ENCODE measurements at regions of chr16 and their contacts with region 1.

Region 1: DNA sequence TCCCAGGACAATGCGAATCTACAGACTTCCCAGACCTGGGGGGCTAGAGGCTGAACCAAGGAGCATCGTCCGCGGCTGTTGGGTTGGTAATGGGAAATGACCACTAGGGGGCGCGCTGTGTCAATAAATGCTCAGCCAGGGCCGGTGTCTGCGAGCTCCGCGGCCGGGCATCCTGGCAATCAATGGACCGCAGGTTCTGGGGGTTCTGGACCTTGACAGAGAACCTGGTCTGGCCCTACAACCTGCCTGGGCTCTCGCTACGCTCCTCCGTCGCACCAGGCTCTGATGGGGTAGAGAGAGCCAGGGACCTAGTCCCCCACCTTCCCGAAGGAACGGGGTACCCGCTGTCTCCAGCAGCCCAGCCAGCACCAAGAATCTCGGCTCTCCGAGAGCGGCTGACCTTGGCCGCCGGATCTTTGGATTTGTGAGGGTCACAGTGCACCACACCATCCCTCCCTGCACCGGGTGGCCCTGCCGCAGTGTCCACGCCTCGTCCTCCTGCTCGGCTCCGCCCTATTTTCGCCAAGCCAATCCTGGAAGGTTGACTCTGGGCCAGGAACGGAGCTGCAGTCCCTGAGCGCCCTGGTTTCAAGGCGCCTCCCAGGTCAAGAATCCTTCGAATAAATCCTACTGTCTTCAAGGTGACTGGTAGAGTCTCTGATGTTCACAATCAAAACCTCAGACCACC is 20.4 kb upstream of the BEAN1 start:
- DNase-seq: peak; percentile 90
- H3K4me3 Mint-ChIP-seq: peak overlapping the region; percentile 77
- H3K27ac Mint-ChIP-seq: peak overlapping the region; percentile 38
- H3K4me1 Mint-ChIP-seq: peaks cover 31% of the 10 kb centered on the region
- H3K27me3 Mint-ChIP-seq: peaks cover 17% of the 10 kb centered on the region

Region 2: DNA sequence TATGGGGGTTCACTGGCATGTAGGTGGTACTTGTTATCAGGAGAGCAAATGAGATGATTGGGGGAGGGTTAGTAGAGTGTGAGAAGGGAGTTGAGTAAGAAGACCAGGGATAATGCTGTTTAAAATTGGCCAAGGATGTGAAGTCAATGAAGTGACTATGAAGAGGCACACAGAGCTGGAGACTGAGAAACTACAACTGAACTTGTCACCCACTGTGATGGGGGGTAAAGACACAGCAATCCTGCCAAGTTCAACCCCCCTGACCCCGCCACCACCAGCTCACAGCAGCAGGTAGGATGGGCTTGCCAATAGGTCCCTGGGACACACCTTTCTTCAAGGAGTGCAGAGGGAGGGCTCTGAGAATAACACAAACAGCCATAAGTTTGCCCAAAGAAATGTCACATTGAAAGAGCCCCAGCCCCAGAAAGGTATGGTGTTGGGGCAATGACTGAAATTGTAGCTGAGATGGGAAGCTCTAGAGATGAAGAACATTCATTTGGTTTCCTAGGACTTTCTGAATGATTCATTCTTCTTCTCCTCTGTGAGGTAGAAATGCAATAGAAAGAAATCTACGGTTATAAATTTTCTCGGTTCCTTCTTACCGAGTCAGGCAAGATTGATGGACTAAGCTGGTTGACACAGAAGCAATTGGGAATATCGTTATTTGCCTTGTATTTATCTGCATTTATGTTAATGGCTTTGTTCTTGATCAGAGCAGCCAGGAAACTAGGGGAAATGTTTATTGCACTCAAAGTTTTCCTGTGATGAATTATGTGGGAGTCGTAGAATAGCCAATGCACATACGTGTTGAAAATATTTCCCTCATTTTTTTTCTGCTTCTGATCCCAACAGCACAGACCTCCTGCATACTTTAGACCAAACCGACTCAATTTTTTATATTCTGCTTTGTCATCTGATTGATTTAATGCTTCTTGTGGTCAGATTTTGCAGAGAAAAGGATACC is 689.7 kb before region 1 on chr16:
- CTCF ChIA-PET with region 1: no interaction called
- POLR2A ChIA-PET with region 1: no interaction called
- DNase-seq: no peak
- H3K4me3 Mint-ChIP-seq: no peak overlapping the region
- H3K27ac Mint-ChIP-seq: no peak overlapping the region
- H3K4me1 Mint-ChIP-seq: no peaks in the 10 kb centered on the region
- H3K27me3 Mint-ChIP-seq: no peaks in the 10 kb centered on the region

Region 3: GRCh38 chr16:66240631-66241395 is 165.9 kb before region 1 on chr16:
- CTCF ChIA-PET with region 1: no interaction called
- POLR2A ChIA-PET with region 1: no interaction called
- DNase-seq: no peak
- H3K4me3 Mint-ChIP-seq: no peak overlapping the region
- H3K27ac Mint-ChIP-seq: no peak overlapping the region
- H3K4me1 Mint-ChIP-seq: no peaks in the 10 kb centered on the region
- H3K27me3 Mint-ChIP-seq: no peaks in the 10 kb centered on the region

Region 4: GRCh38 chr16:66376559-66377305 is 29.9 kb before region 1 on chr16:
- CTCF ChIA-PET with region 1: no interaction called
- POLR2A ChIA-PET with region 1: no interaction called
- DNase-seq: no peak
- H3K4me3 Mint-ChIP-seq: no peak overlapping the region
- H3K27ac Mint-ChIP-seq: no peak overlapping the region
- H3K4me1 Mint-ChIP-seq: no peaks in the 10 kb centered on the region
- H3K27me3 Mint-ChIP-seq: no peaks in the 10 kb centered on the region

Region 5: GRCh38 chr16:66460703-66461102 is 54.0 kb after region 1 on chr16:
- CTCF ChIA-PET with region 1: no interaction called
- POLR2A ChIA-PET with region 1: no interaction called
- DNase-seq: no peak
- H3K4me3 Mint-ChIP-seq: no peak overlapping the region
- H3K27ac Mint-ChIP-seq: no peak overlapping the region
- H3K4me1 Mint-ChIP-seq: no peaks in the 10 kb centered on the region
- H3K27me3 Mint-ChIP-seq: peaks cover 54% of the 10 kb centered on the region

Region 6: DNA sequence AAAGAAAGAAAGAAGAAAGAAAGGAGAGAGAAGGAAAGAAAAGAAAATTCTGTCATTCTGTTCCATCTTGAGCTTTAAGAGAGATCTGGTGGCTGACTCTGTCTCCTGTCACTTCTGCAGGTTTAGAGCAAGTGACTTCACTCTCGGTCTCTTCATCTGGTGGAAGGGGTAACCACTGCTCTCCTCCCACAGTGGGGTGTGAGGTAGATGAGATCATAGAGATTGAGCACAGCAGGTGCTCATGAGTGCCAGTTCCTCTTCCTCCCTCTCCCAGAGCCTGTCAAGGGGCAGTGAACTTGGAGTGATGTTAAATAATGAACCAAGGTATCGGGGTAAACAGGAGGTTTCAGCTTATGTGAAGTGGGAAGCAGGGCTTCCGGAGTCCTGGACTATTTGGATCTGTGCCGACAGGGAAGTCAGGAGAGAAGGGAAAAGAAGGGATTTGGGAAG is 68.1 kb after region 1 on chr16:
- CTCF ChIA-PET with region 1: interaction called, 49 read pairs
- POLR2A ChIA-PET with region 1: interaction called, 3 read pairs
- DNase-seq: peak; percentile 79
- H3K4me3 Mint-ChIP-seq: no peak overlapping the region
- H3K27ac Mint-ChIP-seq: peak overlapping the region; percentile 22
- H3K4me1 Mint-ChIP-seq: peaks cover 43% of the 10 kb centered on the region
- H3K27me3 Mint-ChIP-seq: peaks cover 11% of the 10 kb centered on the region

Region 7: GRCh38 chr16:66516808-66517585 is 110.3 kb after region 1 on chr16:
- CTCF ChIA-PET with region 1: interaction called, 19 read pairs
- POLR2A ChIA-PET with region 1: interaction called, 7 read pairs
- DNase-seq: peak; percentile 92
- H3K4me3 Mint-ChIP-seq: peak overlapping the region; percentile 81
- H3K27ac Mint-ChIP-seq: peak overlapping the region; percentile 97
- H3K4me1 Mint-ChIP-seq: peaks cover 73% of the 10 kb centered on the region
- H3K27me3 Mint-ChIP-seq: no peaks in the 10 kb centered on the region

Region 8: DNA sequence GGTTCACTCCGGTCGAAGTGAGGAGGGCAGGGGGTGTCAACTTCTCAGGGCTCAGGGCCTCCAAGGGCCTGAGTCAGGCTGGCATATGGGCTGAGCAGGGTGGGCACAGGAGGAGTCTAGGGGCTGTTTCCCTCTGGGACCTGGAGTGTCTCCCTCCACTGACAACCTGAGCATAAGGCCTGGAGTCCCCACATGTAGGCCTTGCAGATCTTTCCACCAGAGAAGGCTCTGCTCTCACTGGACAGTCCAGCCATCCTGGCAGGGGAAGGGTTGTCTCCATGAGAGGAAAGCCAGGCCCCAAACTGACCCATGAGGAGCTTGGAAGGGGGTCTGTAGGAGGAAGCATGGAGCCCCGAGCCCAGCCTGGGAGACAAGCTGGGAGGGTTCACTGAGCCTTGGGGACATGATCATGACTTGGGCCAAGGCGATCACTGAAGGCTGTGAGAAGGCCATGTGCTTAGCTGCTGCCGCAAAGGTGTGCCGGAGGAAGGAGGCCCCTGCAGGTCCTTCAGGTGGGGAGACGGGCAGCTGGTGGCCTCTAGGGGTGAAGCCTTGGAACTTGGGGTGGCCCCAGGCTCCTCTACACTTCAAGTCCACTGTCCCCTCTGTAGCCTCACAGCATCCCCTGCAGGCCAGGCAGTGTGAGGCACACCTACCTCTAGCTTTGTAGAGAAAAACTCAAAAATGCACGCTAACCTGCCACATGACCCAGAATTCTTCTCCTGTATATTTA is 182.5 kb after region 1 on chr16:
- CTCF ChIA-PET with region 1: interaction called, 49 read pairs
- POLR2A ChIA-PET with region 1: interaction called, 4 read pairs
- DNase-seq: peak; percentile 81
- H3K4me3 Mint-ChIP-seq: peak overlapping the region; percentile 67
- H3K27ac Mint-ChIP-seq: peak overlapping the region; percentile 47
- H3K4me1 Mint-ChIP-seq: peaks cover 26% of the 10 kb centered on the region
- H3K27me3 Mint-ChIP-seq: peaks cover 2% of the 10 kb centered on the region

Region 9: DNA sequence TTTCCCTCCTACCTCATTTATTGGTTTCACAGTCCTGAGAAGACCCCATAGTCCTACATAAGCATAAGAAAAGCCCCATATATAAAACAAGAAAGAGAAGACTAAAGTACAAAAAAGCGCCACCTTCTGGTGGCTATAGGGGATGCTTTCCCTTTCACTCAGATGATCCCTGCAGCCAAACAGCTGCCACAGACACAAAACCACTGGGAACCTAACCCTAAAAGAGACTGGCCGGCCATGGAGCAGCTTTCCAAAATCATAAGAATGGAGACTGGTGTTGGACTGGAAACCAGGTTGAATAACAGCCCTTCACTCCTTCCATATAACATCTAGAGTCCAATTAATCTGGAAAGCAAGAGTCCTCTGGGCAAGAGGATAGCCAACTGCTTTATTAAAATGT is 333.3 kb after region 1 on chr16:
- CTCF ChIA-PET with region 1: interaction called, 11 read pairs
- POLR2A ChIA-PET with region 1: no interaction called
- DNase-seq: peak; percentile 38
- H3K4me3 Mint-ChIP-seq: no peak overlapping the region
- H3K27ac Mint-ChIP-seq: peak overlapping the region; percentile 65
- H3K4me1 Mint-ChIP-seq: peaks cover 25% of the 10 kb centered on the region
- H3K27me3 Mint-ChIP-seq: no peaks in the 10 kb centered on the region

Measured in activated CD4-positive, alpha-beta memory T cell treated with anti-CD3 and anti-CD28 coated beads, Interleukin-2, amount 10 ng/mL, durations not matched to agents 7 days and 5 days (primary cell).